ENCODE measurements at regions of chr7 and their contacts with region 1.

Region 1: DNA sequence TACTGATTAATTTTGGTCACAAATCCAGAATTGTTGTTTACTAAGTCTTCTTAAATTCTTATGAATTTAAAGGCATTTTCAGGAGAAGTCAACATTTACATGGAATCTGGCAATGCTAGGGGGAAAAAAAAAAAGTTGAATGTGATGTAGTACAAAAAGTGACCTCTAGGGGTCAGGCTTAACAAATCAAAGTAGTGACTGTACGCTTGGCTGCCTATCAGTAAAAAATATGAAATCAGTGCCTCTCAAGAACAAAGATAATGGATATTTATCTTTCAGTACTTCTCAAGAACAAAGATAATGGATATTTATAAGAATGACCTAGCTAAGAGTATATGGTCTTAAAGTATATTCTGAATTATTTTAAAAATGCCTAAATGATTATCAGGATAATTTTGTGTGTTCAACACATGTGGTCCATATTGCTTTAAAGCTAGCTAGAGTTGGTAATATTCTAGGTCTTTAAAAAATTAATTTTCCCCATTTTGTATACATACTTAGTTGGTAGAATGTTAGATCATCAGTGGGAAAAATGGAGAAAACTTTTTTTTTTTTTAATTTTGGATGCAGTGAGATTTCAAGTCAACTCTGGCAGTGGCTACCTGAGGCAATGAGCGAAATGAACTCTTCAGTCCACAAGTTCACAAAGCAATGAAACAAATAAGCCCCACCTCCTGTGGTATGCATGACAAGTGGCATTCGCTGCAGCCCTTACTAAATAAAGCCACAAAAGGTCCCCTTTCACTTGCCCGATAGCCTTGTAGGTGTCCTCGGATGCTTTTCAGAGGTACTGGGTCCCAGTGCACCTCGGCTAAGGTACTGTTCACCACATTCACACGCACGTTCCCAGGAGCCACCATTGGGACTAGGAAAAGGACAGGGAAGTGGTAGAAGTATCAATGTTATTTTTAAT is 51.2 kb upstream of the LAMB4 start:
- DNase-seq: no peak
- ATAC-seq: peak; percentile 30 to 46

Region 2: GRCh38 chr7:108459931-108460551 is 278.7 kb after region 1 on chr7:
- intact Hi-C with region 1: loop called in 1 of 2 experiments (anchors 10 kb)
- DNase-seq: no peak
- ATAC-seq: no peak

Region 3: GRCh38 chr7:108497082-108497725 is 315.9 kb after region 1 on chr7:
- intact Hi-C with region 1: loop called (anchors 5 to 10 kb)
- DNase-seq: peak; percentile 29
- ATAC-seq: peak in 1 of 2 donors; percentile 34

Measured in left cardiac atrium (tissue), 4 donors.